ENCODE measurements at regions of chr20 and their contacts with region 1.

Region 1: DNA sequence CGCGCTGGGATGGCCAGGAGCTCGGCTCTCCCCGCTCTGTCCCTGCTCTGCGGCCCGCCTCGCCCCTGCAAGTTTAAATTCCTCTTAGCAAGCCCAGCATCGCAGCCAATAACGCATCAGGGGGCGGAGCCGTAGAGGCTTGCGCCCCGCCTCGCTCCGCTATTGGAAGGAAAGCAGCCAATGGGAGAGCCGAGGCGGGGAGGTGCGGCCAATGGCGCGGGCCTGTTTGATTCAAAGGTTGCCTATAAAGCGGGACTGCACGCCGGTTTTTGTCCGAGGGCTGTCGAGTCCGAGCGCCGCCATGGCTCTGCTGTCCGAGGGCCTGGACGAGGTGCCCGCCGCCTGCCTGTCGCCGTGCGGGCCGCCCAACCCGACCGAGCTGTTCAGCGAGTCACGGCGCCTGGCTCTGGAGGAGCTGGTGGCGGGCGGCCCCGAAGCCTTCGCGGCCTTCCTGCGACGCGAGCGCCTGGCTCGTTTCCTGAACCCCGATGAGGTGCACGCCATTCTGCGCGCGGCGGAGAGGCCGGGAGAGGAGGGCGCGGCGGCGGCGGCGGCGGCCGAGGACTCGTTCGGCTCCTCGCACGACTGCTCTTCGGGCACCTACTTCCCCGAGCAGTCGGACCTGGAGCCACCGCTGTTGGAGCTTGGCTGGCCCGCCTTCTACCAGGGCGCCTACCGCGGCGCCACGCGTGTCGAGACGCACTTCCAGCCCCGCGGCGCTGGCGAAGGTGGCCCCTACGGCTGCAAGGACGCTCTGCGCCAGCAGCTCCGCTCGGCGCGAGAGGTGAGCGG is at the start of gene FAM83D:
- DNase-seq: peak; percentile 97
- H3K4me3 ChIP-seq: peak within 1 kb of the TSS; percentile 73 to 90 (median 84)
- H3K27ac ChIP-seq: peak within 1 kb of the TSS in 5 of 8 donors; percentile 20 to 73 (median 54)
- H3K4me1 ChIP-seq: peaks cover 8 to 33% (median 27%) of the 10 kb centered on the region in 6 donors
- H3K27me3 ChIP-seq: peaks cover 0 to 8% (median 0%) of the 10 kb centered on the region in 7 donors
- CTCF ChIP-seq: peak in 6 of 11 experiments; percentile 14 to 81 (median 47)
- POLR2A ChIP-seq: peak in 1 of 3 donors; percentile 51
- total RNA-seq, gene FAM83D: 0.46 to 3.0 (median 1.5) TPM

Region 2: DNA sequence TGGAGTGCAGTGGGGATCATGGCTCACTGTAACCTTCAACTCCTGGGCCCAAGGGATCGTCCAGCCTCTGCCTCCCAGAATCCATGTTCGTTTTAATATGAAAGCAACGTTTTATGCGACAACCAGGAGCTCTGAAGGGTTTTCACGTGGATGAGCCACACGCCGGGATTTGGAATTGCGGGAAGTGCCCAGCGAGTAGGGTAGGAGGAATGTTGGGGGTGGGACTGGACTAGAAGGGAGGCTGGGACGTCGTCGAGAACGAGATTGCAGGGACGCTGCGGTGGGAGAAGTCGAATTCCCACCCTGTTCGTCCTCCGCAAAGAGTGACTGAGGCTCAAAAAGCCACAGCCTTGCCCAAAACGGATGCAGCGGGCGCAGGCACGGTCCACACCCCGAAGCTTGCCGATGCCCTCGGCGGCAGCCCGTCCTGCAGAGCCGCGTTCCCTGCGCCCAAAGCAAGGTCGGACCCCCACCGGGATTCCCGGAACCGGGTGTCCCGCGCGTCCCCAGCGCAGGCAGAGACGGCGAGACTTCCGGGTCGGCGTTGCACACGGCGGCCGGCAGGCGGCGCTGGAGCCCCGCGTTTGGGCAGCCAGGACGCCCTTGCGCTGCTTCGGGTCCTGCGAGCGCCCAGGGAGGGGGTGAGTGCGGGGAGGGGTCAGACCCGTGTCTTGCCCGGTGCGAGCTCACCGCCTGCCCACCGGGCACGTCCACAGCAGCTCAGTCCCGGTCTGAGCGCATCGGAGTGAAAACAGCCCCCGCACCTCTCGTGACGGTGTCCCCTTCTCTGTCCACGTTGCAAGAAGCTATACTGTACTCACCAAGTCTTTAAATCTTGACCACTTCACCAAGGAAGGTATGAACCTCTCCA is 123.6 kb after region 1 on chr20:
- intact Hi-C with region 1: loop called (anchors 10 kb)
- DNase-seq: peak; percentile 95
- H3K4me3 ChIP-seq: peak overlapping the region; percentile 53 to 82 (median 70)
- H3K27ac ChIP-seq: peak overlapping the region in 7 of 8 donors; percentile 37 to 81 (median 64)
- H3K4me1 ChIP-seq: peaks cover 3 to 19% (median 16%) of the 10 kb centered on the region in 6 donors
- H3K27me3 ChIP-seq: peaks cover 0 to 16% (median 0%) of the 10 kb centered on the region in 7 donors
- CTCF ChIP-seq: peak; percentile 92 to 99 (median 97)
- POLR2A ChIP-seq: no peak

Measured in spleen (tissue), 13 donors.